ENCODE measurements at regions of chr2 and their contacts with region 1.

Region 1: DNA sequence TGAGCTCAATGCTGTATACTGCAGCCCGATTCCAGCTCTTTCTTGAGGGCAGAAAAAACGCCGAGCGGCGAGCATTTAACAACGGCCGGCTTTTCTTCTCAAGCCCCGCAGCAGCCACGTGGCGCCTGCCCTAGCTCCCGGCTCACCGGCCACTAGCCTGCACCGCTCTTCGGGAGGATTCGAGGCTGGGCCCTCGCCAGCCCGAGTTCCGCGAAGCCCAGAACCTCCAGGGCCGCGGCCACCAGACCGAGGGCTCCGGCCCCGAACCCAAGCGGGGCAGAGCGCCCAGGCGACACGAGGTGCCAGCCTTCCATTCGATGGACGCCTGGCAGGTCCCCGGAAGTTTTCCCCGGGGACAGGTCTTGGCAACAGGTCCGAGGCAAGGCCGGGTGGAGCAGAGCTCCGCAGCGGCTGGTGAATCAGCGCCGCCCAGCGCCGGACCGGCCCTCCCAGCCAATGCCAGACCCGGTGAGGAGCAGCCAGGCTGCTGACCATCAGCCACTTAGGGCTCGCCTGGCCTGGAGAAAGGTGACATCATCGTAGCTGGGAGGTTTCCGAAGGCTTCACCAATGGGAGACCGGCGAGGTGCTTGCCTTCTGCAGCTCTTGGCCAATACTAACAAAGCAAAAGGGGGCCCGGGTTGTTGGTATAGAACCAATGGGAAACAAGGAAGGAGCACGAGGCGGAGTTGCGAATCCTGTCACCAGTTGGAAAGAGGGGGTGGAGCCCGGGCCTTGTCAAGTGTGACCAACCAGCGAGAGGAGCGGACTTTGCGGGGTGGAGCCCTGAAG is 544 bp upstream of the MXD1 start:
- DNase-seq: peak; percentile 100
- H3K4me3 ChIP-seq: peak overlapping the region; percentile 74
- H3K4me3 Mint-ChIP-seq: peak overlapping the region; percentile 82
- H3K27ac Mint-ChIP-seq: peak overlapping the region; percentile 82
- H3K4me1 ChIP-seq: no peaks in the 10 kb centered on the region
- H3K4me1 Mint-ChIP-seq: peaks cover 4% of the 10 kb centered on the region
- H3K27me3 ChIP-seq: no peaks in the 10 kb centered on the region
- H3K27me3 Mint-ChIP-seq: no peaks in the 10 kb centered on the region
- CTCF ChIP-seq: peak in 1 of 2 experiments; percentile 33

Region 2: GRCh38 chr2:69724540-69725159 is 189.7 kb before region 1 on chr2:
- CTCF ChIA-PET with region 1: interaction called, 33 read pairs
- POLR2A ChIA-PET with region 1: interaction called, 12 read pairs
- intact Hi-C with region 1: loop called (anchors 2 kb)
- DNase-seq: peak; percentile 85 to 92
- H3K4me3 ChIP-seq: peak overlapping the region; percentile 20
- H3K4me3 Mint-ChIP-seq: peak overlapping the region; percentile 66
- H3K27ac Mint-ChIP-seq: no peak overlapping the region
- H3K4me1 ChIP-seq: peaks cover 5% of the 10 kb centered on the region
- H3K4me1 Mint-ChIP-seq: peaks cover 12% of the 10 kb centered on the region
- H3K27me3 ChIP-seq: no peaks in the 10 kb centered on the region
- H3K27me3 Mint-ChIP-seq: no peaks in the 10 kb centered on the region
- CTCF ChIP-seq: peak; percentile 83 to 95

Region 3: GRCh38 chr2:69933839-69934613 is 19.7 kb after region 1 on chr2:
- CTCF ChIA-PET with region 1: interaction called, 16 read pairs
- POLR2A ChIA-PET with region 1: interaction called, 54 read pairs
- intact Hi-C with region 1: loop called (anchors 1 kb)
- DNase-seq: peak; percentile 52 to 56
- H3K4me3 ChIP-seq: no peak overlapping the region
- H3K4me3 Mint-ChIP-seq: peak overlapping the region; percentile 58
- H3K27ac Mint-ChIP-seq: peak overlapping the region; percentile 82
- H3K4me1 ChIP-seq: peaks cover 23% of the 10 kb centered on the region
- H3K4me1 Mint-ChIP-seq: peaks cover 31% of the 10 kb centered on the region
- H3K27me3 ChIP-seq: no peaks in the 10 kb centered on the region
- H3K27me3 Mint-ChIP-seq: no peaks in the 10 kb centered on the region
- CTCF ChIP-seq: no peak

Region 4: DNA sequence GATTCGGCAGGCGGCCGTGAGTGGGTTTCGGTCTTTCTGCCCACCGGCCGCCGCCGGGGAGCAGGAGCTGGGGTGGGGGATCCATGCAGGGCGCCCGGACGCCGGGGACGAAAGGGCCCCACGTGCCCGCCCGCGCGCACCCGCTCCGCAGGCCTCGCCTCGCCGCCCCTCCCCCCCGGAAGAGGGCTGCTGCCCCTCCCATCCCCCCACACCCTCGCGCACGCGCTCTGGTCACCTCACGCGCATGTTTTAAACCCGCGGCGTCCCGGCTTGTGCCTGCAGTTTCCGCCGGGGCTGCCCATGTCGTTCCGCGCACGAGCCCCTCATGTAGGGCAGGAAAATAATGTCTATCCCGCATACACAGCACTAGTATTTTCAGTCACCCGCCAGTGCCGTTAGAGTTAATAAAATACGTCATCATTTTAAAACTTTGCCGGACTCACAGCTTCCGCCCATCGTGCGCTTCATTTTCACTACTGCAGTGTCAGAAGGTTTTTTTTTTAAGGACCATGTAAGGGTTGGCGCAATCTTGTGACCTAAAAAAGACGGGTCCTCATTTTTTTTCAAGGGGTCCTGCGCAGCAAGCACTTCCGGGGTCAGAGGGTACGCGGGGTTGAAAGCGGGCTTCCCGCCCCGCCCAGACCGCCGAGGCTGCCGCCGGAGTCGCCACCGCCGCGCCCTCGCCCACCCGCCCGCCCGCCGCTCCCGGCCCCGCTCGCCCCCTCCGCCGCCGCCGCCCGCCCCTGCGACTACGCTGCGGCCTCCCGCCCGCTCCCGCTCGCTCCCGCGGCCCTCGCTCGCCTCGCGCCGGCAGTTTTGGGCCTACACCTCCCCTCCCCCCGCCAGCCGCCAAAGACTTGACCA is 172.7 kb after region 1 on chr2 and contains the start of gene PCBP1:
- CTCF ChIA-PET with region 1: interaction called, 10 read pairs
- POLR2A ChIA-PET with region 1: interaction called, 58 read pairs
- intact Hi-C with region 1: loop called (anchors 1 kb)
- DNase-seq: peak; percentile 96 to 98
- H3K4me3 ChIP-seq: peak within 1 kb of the TSS; percentile 68
- H3K4me3 Mint-ChIP-seq: peak within 1 kb of the TSS; percentile 92
- H3K27ac Mint-ChIP-seq: peak within 1 kb of the TSS; percentile 100
- H3K4me1 ChIP-seq: peaks cover 17% of the 10 kb centered on the region; the same call in 1 of the 2 replicates
- H3K4me1 Mint-ChIP-seq: peaks cover 29% of the 10 kb centered on the region
- H3K27me3 ChIP-seq: no peaks in the 10 kb centered on the region
- H3K27me3 Mint-ChIP-seq: no peaks in the 10 kb centered on the region
- CTCF ChIP-seq: no peak
- total RNA-seq, gene PCBP1: 308 and 319 TPM in 2 replicates

Region 5: DNA sequence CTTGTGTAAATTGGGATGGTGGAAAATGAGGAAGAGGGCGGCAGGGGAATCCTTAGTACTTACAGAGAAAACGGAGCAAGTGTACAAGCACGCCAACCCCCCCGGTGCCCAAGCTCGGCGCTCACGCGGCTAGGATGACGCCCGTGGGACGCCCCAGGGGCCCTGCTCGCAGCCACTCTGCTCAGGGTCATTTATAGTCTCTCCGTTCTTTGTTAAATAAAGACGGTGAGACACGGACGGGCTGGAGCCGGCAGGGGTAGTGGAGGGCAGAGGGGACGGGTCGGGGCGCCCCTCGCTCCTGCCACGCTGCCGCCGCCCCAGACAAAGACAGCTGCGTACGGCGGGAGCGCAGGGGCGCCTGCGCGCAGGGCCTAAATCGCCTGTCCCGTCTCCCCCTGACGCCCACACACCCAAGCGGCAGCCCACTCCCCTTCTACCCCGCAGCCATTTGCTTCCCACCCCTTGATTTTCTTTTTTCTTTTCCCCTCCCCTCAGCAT is 210.7 kb after region 1 on chr2:
- CTCF ChIA-PET with region 1: no interaction called
- POLR2A ChIA-PET with region 1: interaction called, 19 read pairs
- intact Hi-C with region 1: no loop called
- DNase-seq: peak; percentile 72 to 76
- H3K4me3 ChIP-seq: peak overlapping the region; percentile 84
- H3K4me3 Mint-ChIP-seq: peak overlapping the region; percentile 91
- H3K27ac Mint-ChIP-seq: peak overlapping the region; percentile 99
- H3K4me1 ChIP-seq: peaks cover 29% of the 10 kb centered on the region
- H3K4me1 Mint-ChIP-seq: peaks cover 35% of the 10 kb centered on the region
- H3K27me3 ChIP-seq: no peaks in the 10 kb centered on the region
- H3K27me3 Mint-ChIP-seq: no peaks in the 10 kb centered on the region
- CTCF ChIP-seq: no peak

Region 6: GRCh38 chr2:70142590-70143313 is 228.4 kb after region 1 on chr2:
- CTCF ChIA-PET with region 1: interaction called, 10 read pairs
- POLR2A ChIA-PET with region 1: interaction called, 49 read pairs
- intact Hi-C with region 1: loop called (anchors 1 kb)
- DNase-seq: peak; percentile 99 to 100
- H3K4me3 ChIP-seq: peak overlapping the region; percentile 64
- H3K4me3 Mint-ChIP-seq: peak overlapping the region; percentile 83
- H3K27ac Mint-ChIP-seq: peak overlapping the region; percentile 99
- H3K4me1 ChIP-seq: peaks cover 32% of the 10 kb centered on the region
- H3K4me1 Mint-ChIP-seq: peaks cover 21% of the 10 kb centered on the region
- H3K27me3 ChIP-seq: no peaks in the 10 kb centered on the region
- H3K27me3 Mint-ChIP-seq: no peaks in the 10 kb centered on the region
- CTCF ChIP-seq: peak; percentile 94 to 95

Region 7: DNA sequence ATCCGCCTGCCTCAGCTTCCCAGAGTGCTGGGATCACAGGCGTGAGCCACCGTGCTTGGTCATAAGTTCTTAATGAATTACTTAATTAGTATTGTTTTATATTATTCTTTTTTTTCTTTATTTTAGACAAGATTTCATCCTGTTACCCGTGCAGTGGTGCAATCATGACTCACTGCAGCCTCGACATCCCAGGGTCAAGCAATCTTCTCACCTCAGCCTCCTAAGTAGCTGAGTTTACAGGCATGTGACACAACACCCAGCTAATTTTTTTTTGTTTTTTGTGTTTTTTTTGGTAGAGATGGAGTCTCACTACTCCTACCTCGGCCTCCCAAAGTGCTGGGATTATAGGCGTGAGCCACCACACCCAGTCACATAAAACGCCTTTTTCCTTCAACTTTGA is 259.2 kb after region 1 on chr2:
- CTCF ChIA-PET with region 1: no interaction called
- POLR2A ChIA-PET with region 1: no interaction called
- intact Hi-C with region 1: no loop called
- DNase-seq: no peak
- H3K4me3 ChIP-seq: no peak overlapping the region
- H3K4me3 Mint-ChIP-seq: no peak overlapping the region
- H3K27ac Mint-ChIP-seq: no peak overlapping the region
- H3K4me1 ChIP-seq: no peaks in the 10 kb centered on the region
- H3K4me1 Mint-ChIP-seq: no peaks in the 10 kb centered on the region
- H3K27me3 ChIP-seq: no peaks in the 10 kb centered on the region
- H3K27me3 Mint-ChIP-seq: no peaks in the 10 kb centered on the region
- CTCF ChIP-seq: no peak

Region 8: DNA sequence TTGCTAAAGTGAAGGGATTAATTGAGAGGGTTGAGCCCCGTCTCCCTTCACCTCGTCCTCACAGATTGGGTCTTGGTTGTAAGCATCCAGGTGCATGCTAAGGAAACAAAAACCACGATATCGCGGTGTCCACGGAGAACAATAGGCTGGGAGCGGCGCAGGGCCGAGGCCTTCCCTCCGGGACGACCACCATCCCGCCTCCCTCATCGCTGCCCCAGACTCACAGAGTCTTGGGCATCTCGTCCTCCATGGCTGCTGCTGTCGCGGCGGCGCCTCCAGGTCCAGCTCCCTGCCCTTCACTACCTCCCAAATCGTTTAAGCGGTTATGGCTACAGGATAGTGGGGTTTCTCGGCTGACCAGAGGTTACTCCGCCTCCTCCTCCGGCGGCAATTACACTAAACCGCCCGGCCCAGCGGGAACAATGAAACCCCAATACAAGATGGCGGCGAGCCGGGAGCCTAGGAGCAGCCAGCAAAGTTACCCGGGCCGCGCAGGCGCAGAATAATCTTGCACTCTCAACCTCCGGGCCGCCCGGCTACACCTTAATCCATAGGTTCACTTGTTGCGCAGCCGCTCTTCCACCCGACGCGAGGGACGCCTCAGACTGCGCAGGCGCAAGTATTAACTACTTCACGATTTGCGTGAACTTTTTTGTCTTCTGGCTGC is 333.9 kb after region 1 on chr2 and contains the start of gene TIA1:
- CTCF ChIA-PET with region 1: no interaction called
- POLR2A ChIA-PET with region 1: interaction called, 4 read pairs
- intact Hi-C with region 1: loop called (anchors 1 kb)
- DNase-seq: peak; percentile 98 to 99
- H3K4me3 ChIP-seq: peak within 1 kb of the TSS; percentile 61
- H3K4me3 Mint-ChIP-seq: peak within 1 kb of the TSS; percentile 89
- H3K27ac Mint-ChIP-seq: peak within 1 kb of the TSS; percentile 95
- H3K4me1 ChIP-seq: peaks cover 6% of the 10 kb centered on the region; the same call in 1 of the 2 replicates
- H3K4me1 Mint-ChIP-seq: peaks cover 18% of the 10 kb centered on the region
- H3K27me3 ChIP-seq: no peaks in the 10 kb centered on the region
- H3K27me3 Mint-ChIP-seq: peaks cover 3% of the 10 kb centered on the region
- CTCF ChIP-seq: no peak
- total RNA-seq, gene TIA1: 146 and 149 TPM in 2 replicates

Measured in Caco-2 (cell line).